Activated CD8-positive, alpha-beta T cell treated with anti-CD3 and anti-CD28 coated beads, Interleukin-2, amount 10 ng/mL, durations not matched to agents 7 days and 5 days (primary cell): ENCODE measurements at regions of chr5 and their contacts with region 1.

Region 1: DNA sequence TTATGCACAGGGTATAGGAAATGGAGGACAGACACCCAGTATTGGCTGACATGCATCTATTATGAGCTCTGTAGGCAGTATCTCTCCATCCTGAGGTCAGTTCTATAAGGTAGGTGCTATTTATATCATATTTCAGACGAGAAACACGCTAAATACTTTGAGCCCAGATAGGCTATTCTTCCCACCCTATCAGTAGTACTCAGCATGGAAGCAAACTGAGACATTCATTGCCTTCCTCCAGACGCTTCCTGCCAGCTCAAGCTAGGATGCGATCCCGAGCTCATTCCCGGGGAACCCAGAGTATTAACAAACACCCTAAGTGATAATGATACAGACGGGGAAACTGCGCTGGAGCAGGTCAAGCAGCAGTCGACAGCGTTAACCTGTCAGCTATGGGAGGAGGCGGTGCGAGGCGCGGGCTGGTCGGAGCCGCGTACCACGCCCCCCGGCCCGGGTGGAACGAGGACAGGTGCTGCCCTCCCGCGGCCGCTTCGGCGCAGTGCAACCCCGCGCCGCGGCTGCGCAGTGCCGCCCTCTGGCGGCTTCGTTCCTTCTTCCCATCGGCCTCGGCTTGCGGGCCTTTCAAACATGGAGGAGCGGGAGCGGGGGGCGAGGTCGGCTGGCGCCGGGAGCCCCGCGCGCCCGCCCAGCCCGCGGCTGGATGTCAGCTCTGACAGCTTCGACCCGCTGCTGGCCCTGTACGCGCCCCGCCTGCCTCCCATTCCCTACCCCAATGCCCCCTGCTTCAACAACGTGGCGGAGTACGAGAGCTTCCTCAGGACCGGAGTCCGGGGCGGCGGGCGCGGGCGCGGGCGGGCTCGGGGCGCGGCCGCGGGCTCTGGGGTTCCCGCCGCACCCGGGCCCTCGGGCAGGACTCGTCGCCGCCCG is at the start of gene LSM11:
- DNase-seq: peak; percentile 91
- ATAC-seq: peak; percentile 94
- H3K4me3 Mint-ChIP-seq: peak within 1 kb of the TSS; percentile 88
- H3K27ac Mint-ChIP-seq: peak within 1 kb of the TSS; percentile 89
- H3K4me1 Mint-ChIP-seq: peaks cover 33% of the 10 kb centered on the region
- H3K27me3 Mint-ChIP-seq: no peaks in the 10 kb centered on the region
- total RNA-seq, gene LSM11: 5.7 to 5.8 TPM

Region 2: GRCh38 chr5:157328277-157328912 is 415.0 kb before region 1 on chr5:
- CTCF ChIA-PET with region 1: interaction called, 30 read pairs
- POLR2A ChIA-PET with region 1: no interaction called
- DNase-seq: peak; percentile 68
- ATAC-seq: peak; percentile 96
- H3K4me3 Mint-ChIP-seq: no peak overlapping the region
- H3K27ac Mint-ChIP-seq: peak overlapping the region; percentile 77
- H3K4me1 Mint-ChIP-seq: peaks cover 25% of the 10 kb centered on the region
- H3K27me3 Mint-ChIP-seq: no peaks in the 10 kb centered on the region

Region 3: GRCh38 chr5:157342822-157343402 is 400.5 kb before region 1 on chr5:
- CTCF ChIA-PET with region 1: interaction called, 10 read pairs
- POLR2A ChIA-PET with region 1: no interaction called
- DNase-seq: peak; percentile 48
- ATAC-seq: peak; percentile 60
- H3K4me3 Mint-ChIP-seq: no peak overlapping the region
- H3K27ac Mint-ChIP-seq: no peak overlapping the region
- H3K4me1 Mint-ChIP-seq: peaks cover 5% of the 10 kb centered on the region
- H3K27me3 Mint-ChIP-seq: no peaks in the 10 kb centered on the region

Region 4: GRCh38 chr5:157390551-157391297 is 352.7 kb before region 1 on chr5:
- CTCF ChIA-PET with region 1: interaction called, 11 read pairs
- POLR2A ChIA-PET with region 1: no interaction called
- DNase-seq: peak; percentile 70
- ATAC-seq: peak; percentile 83
- H3K4me3 Mint-ChIP-seq: no peak overlapping the region
- H3K27ac Mint-ChIP-seq: peak overlapping the region; percentile 90
- H3K4me1 Mint-ChIP-seq: peaks cover 27% of the 10 kb centered on the region
- H3K27me3 Mint-ChIP-seq: no peaks in the 10 kb centered on the region

Region 5: DNA sequence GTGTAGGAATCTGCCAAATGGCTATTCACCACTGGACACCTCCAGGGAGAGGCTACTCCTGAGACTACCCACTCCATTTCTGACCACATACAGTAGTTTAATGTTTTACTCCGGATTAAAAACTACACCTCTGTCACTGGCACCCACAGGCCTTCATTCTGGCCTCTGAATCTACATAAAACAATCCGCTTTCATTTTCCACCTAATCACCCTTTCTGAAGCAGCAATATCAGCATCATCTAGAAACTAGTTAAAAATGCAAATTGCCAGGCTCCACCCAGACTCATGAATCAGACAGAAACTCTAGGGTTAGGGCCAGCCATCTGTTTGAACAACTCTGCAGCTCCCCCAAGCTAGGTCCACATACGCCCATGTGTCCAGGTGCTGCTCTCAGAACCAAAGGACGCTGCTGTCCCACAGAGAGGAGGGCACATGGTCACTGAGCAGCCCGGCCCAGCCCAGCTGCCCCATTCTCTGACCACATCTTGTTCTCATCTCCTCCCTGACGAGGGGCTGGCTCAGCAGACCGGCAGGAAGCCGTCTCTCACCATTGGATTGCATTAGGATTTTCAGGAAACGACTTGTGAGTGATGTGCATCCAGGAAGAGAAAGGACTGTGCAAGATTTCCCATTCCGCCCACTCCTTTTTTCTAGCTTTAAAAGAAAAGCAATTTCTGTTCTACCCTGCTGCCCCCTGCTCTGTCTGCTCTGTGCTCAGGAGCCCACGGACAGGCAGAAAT is 202.5 kb before region 1 on chr5:
- CTCF ChIA-PET with region 1: interaction called, 20 read pairs
- POLR2A ChIA-PET with region 1: no interaction called
- DNase-seq: peak; percentile 60
- ATAC-seq: peak; percentile 67
- H3K4me3 Mint-ChIP-seq: peak overlapping the region; percentile 53
- H3K27ac Mint-ChIP-seq: peak overlapping the region; percentile 82
- H3K4me1 Mint-ChIP-seq: peaks cover 81% of the 10 kb centered on the region
- H3K27me3 Mint-ChIP-seq: no peaks in the 10 kb centered on the region

Region 6: GRCh38 chr5:157670662-157671591 is 72.5 kb before region 1 on chr5 and contains the start of gene C5orf52:
- CTCF ChIA-PET with region 1: interaction called, 50 read pairs
- POLR2A ChIA-PET with region 1: no interaction called
- DNase-seq: peak; percentile 33
- ATAC-seq: peak; percentile 64
- H3K4me3 Mint-ChIP-seq: peak within 1 kb of the TSS; percentile 82
- H3K27ac Mint-ChIP-seq: peak within 1 kb of the TSS; percentile 42
- H3K4me1 Mint-ChIP-seq: peaks cover 25% of the 10 kb centered on the region
- H3K27me3 Mint-ChIP-seq: peaks cover 34% of the 10 kb centered on the region
- total RNA-seq, gene C5orf52: not detected

Region 7: GRCh38 chr5:157731272-157732129 is 11.9 kb before region 1 on chr5 and contains the start of gene THG1L:
- CTCF ChIA-PET with region 1: interaction called, 85 read pairs
- POLR2A ChIA-PET with region 1: interaction called, 10 read pairs
- DNase-seq: peak; percentile 99
- ATAC-seq: peak; percentile 98
- H3K4me3 Mint-ChIP-seq: peak within 1 kb of the TSS; percentile 89
- H3K27ac Mint-ChIP-seq: peak within 1 kb of the TSS; percentile 94
- H3K4me1 Mint-ChIP-seq: peaks cover 20% of the 10 kb centered on the region
- H3K27me3 Mint-ChIP-seq: no peaks in the 10 kb centered on the region
- total RNA-seq, gene THG1L: 12.4 to 13.4 TPM